ENCODE measurements at regions of chr17 and their contacts with region 1.

Region 1: DNA sequence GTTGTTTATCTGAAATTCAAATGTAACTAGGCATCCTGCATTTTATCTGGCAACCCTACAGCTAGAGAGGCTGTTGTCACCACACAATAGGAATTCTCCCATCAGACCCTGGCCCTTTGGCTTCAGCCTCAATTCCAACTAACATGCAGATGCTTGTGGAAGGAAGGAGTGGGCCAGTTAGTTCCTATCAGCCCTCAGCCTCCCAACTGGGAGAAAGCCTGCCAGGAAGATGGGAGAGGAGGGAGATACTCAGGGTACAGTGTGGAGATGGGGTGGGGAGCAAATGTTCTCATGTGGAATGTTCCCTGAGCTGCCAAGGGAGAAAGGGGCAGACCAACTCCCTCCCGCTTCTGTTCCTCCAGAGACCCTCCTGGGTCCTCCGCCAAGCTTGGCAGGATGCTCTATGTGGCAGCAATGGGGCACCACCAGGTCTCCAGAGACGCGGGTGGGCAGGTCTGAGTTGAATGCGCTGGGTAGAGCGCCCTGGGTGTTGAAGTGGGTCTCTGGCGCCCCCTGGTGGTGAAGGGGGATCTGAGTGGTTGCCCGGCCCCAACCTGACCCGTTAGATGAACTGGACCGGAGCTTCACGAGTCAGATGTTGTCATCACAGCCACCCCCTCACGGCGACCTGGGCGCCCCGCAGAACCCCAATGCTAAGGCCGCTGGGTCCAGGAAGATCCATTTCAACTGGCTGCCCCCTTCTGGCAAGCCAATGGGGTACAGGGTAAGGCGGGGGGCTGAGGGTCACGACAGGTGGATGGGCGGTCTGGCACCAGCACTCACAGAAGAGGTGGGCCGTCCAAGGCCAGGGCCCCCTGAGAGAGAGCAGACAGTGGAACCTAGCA is 15.2 kb downstream of the GALK1 start:
- DNase-seq: peak; percentile 85

Region 2: DNA sequence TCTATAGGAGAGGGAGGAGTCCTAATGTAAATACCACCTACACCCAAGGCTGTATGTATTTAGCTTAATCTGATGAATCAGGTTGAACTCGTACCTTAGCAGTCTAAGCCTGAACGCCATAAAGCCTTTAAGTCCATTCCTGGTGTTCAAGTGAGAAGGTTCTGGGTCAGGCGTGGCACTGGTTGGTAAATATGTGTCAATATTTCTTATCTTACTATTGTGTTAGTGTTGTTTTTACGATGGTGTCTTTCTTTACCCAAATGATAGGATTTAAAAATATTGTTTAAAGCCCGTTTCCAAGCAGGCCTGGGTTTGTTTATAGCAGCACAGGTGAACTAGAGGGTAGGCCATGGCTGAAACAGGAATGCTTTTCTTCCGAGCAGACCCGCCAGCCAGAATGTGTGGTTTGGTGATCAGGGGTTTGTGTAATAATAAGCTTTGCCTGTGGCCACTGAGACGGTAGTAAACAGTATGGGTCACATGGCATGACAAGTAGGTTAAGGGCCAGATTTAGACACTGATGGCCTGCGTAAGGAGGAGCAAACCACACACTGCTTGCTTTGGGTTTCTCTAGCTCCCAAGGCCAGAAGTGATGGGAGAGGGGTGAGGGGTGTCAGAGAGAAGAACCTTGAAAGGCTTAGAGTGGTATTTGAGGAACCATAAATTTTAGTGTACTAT is 290.0 kb before region 1 on chr17:
- CTCF ChIA-PET with region 1: no interaction called
- POLR2A ChIA-PET with region 1: no interaction called
- DNase-seq: no peak

Region 3: DNA sequence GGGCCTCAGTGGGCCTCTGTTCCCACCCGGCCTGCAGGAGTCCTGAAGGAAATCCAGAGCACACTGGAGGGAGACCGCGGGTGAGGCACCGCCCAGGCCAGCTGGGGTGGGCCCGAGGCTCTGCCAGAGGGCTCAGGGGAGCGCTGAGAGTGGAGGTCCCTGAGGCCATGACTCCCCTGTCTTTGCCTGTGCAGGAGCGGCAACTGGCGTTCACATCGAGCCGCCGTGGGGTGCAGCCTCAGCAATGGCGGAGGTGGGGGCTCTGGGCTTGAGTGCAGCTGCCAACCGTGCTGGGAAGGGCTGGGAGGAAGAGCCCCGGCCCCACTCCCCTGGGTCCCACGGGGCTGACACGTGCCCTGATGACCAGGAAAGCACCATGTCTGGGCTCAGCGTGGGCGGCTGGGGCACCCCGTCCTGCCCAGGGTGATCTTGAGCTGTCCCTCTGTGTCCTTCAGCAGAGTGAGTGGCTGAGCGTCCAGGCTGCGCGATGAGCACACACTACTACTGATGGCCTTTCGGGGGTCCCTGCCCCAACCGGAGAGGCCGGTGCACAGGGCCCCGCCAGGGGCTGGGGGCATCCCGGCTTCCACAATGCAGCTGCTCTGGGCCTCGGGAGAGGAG is 175.2 kb before region 1 on chr17:
- CTCF ChIA-PET with region 1: no interaction called
- POLR2A ChIA-PET with region 1: no interaction called
- DNase-seq: no peak

Region 4: GRCh38 chr17:75601057-75602051 is 148.4 kb before region 1 on chr17:
- CTCF ChIA-PET with region 1: interaction called, 13 read pairs
- POLR2A ChIA-PET with region 1: no interaction called
- DNase-seq: peak; percentile 89

Region 5: GRCh38 chr17:75625813-75626486 is 123.8 kb before region 1 on chr17:
- CTCF ChIA-PET with region 1: interaction called, 12 read pairs
- POLR2A ChIA-PET with region 1: no interaction called
- DNase-seq: peak; percentile 80

Region 6: GRCh38 chr17:75688209-75688825 is 61.5 kb before region 1 on chr17:
- CTCF ChIA-PET with region 1: interaction called, 10 read pairs
- POLR2A ChIA-PET with region 1: no interaction called
- DNase-seq: no peak

Region 7: DNA sequence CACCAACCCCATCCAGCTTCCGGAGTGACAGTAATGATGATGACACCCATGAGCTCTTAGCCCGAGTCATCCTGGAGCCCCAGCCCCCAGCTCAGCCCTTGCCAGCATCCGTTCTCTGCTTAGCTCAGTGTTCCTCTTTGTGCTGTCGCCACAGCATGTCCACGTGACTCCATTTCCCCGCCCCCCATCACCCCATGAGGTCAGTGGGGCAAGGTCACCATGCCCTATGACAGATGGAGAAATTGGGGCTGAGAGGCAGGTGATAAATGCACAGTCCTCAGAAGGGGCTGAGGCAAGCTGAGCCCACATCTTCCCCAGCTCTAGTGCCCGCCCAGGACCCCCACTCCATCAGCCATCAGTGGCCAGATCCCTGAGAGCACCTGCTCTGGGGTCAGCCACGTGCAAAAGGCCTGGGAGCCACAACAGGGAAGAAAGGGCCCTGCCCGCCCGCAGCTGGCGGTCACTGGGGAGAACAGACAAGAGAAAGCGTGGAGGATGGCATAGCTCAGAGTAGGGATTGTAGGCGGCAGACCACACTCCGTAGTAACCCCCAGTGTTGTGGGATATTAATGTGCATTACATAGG is 11.5 kb before region 1 on chr17:
- CTCF ChIA-PET with region 1: interaction called, 16 read pairs
- POLR2A ChIA-PET with region 1: interaction called, 4 read pairs
- DNase-seq: no peak

Region 8: GRCh38 chr17:75764711-75765421 is 15.1 kb after region 1 on chr17 and contains the start of gene GALK1:
- CTCF ChIA-PET with region 1: interaction called, 17 read pairs
- POLR2A ChIA-PET with region 1: interaction called, 4 read pairs
- DNase-seq: peak; percentile 83